A549 (cell line): ENCODE measurements at regions of chr14 and their contacts with region 1.

Region 1: DNA sequence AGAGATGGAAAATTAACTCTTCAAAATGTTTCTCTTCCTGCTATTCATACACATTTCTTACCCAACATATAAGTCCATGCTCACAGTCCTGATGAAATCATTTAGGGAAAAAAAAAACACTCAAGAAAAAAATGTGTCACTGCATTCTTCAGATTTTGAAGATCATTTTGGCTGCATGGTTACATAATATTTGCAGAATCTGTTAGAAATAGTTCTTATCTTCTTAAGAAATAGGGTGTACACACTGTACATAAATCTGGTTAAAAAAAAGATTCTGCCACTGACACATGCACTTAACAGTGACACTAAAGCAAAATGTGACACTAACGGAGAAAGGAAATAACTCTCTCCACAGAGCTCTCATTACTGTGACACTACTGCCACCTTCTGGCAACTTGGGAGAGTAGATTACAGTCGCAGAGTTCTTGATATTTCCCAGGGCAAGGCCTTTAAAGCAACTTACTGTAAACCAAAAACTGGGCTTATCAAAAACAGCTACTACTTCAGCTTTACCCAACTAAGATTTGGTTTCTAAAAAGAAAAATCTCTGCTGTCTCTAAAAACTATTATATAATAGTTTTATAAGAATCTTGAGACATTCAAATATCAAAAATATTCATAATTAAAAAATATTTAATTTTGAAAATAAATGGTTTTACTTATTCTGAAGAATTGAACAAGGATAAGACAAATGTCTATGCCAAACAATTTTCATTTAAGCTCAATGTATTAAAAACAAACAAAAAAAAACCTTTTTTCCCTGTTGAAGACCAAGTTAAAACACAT is 65.0 kb downstream of the SETD3 start:
- DNase-seq: peak; percentile 73 to 83
- ATAC-seq: peak; percentile 91 to 96
- H3K4me3 ChIP-seq: no peak overlapping the region
- H3K27ac ChIP-seq: no peak overlapping the region
- H3K4me1 ChIP-seq: peaks cover 5% of the 10 kb centered on the region; the same call in 1 of the 3 replicates
- CTCF ChIP-seq: peak; percentile 93
- EP300 ChIP-seq: no peak
- POLR2A ChIP-seq: no peak
- RAD21 ChIP-seq: peak; percentile 91

Region 2: GRCh38 chr14:99271951-99272631 is 143.6 kb before region 1 on chr14 and contains the start of gene BCL11B:
- CTCF ChIA-PET with region 1: interaction called, 13 read pairs
- POLR2A ChIA-PET with region 1: interaction called, 3 read pairs
- DNase-seq: peak; percentile 86 to 93
- ATAC-seq: peak; percentile 62 to 81
- H3K4me3 ChIP-seq: peak within 1 kb of the TSS; percentile 83
- H3K27ac ChIP-seq: peak within 1 kb of the TSS; percentile 85 to 89
- H3K4me1 ChIP-seq: peaks cover 23% of the 10 kb centered on the region
- CTCF ChIP-seq: peak; percentile 61
- EP300 ChIP-seq: no peak
- POLR2A ChIP-seq: peak; percentile 52
- RAD21 ChIP-seq: peak; percentile 63 to 78
- polyA plus RNA-seq, gene BCL11B: 0.43 and 0.44 TPM in 2 replicates

Region 3: DNA sequence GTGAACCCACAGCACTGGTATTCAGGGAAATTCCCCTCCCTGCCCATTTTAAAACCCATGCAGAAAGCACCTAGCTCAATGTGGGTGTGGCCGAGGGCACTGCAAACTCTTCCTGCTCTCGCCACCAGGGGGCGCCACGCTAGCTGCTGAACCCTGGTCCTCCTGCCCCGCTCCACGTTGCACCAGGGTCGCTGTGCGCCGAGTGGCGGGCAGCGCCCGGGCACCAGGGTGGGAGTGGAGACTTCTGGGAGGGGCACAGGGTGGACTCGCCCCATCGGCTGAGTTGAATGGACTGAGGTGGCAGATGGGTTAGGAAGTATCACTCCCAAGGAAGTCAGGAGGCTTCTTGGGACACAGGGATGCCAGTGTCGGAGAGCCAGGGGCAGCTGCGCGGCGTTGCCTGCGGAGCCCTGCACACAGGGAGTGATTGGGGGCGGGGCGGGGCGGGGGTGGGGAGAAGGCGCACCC is 95.5 kb before region 1 on chr14:
- CTCF ChIA-PET with region 1: interaction called, 45 read pairs
- POLR2A ChIA-PET with region 1: no interaction called
- DNase-seq: peak; percentile 71 to 77
- ATAC-seq: peak; percentile 54 to 80; a peak in 5 of 6 replicates
- H3K4me3 ChIP-seq: 0 out of 3 replicates have a peak overlapping the region, but pooled peaks have one; percentile 3
- H3K27ac ChIP-seq: peak overlapping the region; percentile 53 to 87
- H3K4me1 ChIP-seq: peaks cover 54% of the 10 kb centered on the region
- CTCF ChIP-seq: peak; percentile 91
- EP300 ChIP-seq: no peak
- POLR2A ChIP-seq: no peak
- RAD21 ChIP-seq: peak; percentile 48 to 59; a peak in 4 of 5 replicates

Region 4: GRCh38 chr14:99401621-99402284 is 13.9 kb before region 1 on chr14:
- CTCF ChIA-PET with region 1: interaction called, 178 read pairs
- POLR2A ChIA-PET with region 1: no interaction called
- DNase-seq: no peak
- ATAC-seq: no peak
- H3K4me3 ChIP-seq: no peak overlapping the region
- H3K27ac ChIP-seq: no peak overlapping the region
- H3K4me1 ChIP-seq: no peaks in the 10 kb centered on the region
- CTCF ChIP-seq: no peak
- EP300 ChIP-seq: no peak
- POLR2A ChIP-seq: no peak
- RAD21 ChIP-seq: no peak

Region 5: DNA sequence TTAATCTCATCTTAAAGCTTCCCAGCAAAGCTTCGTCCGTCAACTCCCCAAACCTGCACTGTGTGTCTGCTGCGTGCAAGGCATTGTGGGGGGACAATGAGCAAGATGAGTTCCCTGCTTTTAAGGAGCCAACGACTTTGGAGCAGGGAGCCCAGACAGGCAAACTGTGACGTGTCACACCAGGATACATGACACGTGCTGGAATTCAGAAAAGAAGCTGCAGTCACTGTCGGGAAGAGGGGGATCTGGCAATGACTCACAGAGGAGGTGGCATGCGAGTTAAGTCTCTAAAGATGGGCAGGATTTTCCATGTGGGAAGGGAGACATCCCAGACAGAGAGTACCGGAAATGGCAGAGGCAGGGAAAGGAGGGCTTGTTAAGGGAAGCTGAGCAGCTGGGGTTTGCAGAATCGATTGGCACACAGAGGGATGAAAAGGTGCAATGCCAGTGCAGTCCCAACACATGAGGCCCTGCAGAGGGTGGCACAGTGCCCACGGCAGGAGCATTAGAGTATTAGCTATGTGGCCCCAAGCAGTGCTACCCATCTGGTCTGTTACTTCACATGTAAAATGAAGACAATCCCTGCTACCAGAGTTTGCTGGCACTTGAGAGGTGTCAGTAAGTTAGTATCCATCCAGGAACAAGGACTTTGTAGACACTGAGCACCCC is 12.1 kb after region 1 on chr14:
- CTCF ChIA-PET with region 1: interaction called, 47 read pairs
- POLR2A ChIA-PET with region 1: no interaction called
- DNase-seq: no peak
- ATAC-seq: no peak
- H3K4me3 ChIP-seq: no peak overlapping the region
- H3K27ac ChIP-seq: no peak overlapping the region
- H3K4me1 ChIP-seq: peaks cover under 1% of the 10 kb centered on the region; the same call in 1 of the 3 replicates
- CTCF ChIP-seq: no peak
- EP300 ChIP-seq: no peak
- POLR2A ChIP-seq: no peak
- RAD21 ChIP-seq: no peak

Region 6: GRCh38 chr14:99475179-99475578 is 59.5 kb after region 1 on chr14:
- CTCF ChIA-PET with region 1: no interaction called
- POLR2A ChIA-PET with region 1: no interaction called
- DNase-seq: no peak
- ATAC-seq: no peak
- H3K4me3 ChIP-seq: no peak overlapping the region
- H3K27ac ChIP-seq: no peak overlapping the region
- H3K4me1 ChIP-seq: peaks cover 17% of the 10 kb centered on the region
- CTCF ChIP-seq: no peak
- EP300 ChIP-seq: no peak
- POLR2A ChIP-seq: no peak
- RAD21 ChIP-seq: no peak